Activated CD4-positive, alpha-beta T cell treated with anti-CD3 and anti-CD28 coated beads for 36 hours (primary cell): ENCODE measurements at regions of chr1 and their contacts with region 1.

Region 1: GRCh38 chr1:184805667-184806295 is 51.1 kb upstream of the EDEM3 start:
- DNase-seq: peak; percentile 91
- ATAC-seq: peak; percentile 99
- H3K4me3 Mint-ChIP-seq: no peak overlapping the region
- H3K27ac Mint-ChIP-seq: no peak overlapping the region
- H3K4me1 Mint-ChIP-seq: peaks cover 4% of the 10 kb centered on the region
- H3K27me3 Mint-ChIP-seq: no peaks in the 10 kb centered on the region

Region 2: GRCh38 chr1:184793967-184794366 is 11.8 kb before region 1 on chr1:
- CTCF ChIA-PET with region 1: interaction called, 12 read pairs
- POLR2A ChIA-PET with region 1: no interaction called
- intact Hi-C with region 1: no loop called
- DNase-seq: no peak
- ATAC-seq: no peak
- H3K4me3 Mint-ChIP-seq: no peak overlapping the region
- H3K27ac Mint-ChIP-seq: no peak overlapping the region
- H3K4me1 Mint-ChIP-seq: peaks cover 11% of the 10 kb centered on the region
- H3K27me3 Mint-ChIP-seq: no peaks in the 10 kb centered on the region

Region 3: DNA sequence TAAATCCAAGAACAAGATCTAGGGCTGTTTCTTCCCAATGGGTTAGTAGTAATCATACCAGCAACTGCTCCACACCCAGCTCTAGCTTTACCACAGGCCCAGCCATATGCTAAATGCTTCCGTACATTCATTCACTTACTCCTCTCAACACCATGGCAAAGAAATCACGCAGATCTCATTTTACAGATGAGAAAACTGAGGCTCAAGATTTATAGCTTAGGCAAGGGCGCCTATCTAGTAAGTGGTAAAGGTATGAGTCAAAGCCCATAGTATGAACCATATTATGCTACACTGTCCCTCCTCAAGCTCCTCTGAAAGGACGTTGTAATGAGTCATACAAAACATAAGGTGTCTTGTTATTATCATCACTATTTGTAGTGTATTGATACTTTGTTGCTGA is 86.3 kb after region 1 on chr1:
- CTCF ChIA-PET with region 1: interaction called, 4 read pairs
- POLR2A ChIA-PET with region 1: no interaction called
- intact Hi-C with region 1: loop called in 1 of 2 experiments (anchors 5 kb)
- DNase-seq: peak; percentile 48
- ATAC-seq: peak; percentile 74
- H3K4me3 Mint-ChIP-seq: no peak overlapping the region
- H3K27ac Mint-ChIP-seq: peak overlapping the region; percentile 67
- H3K4me1 Mint-ChIP-seq: peaks cover 52% of the 10 kb centered on the region
- H3K27me3 Mint-ChIP-seq: no peaks in the 10 kb centered on the region

Region 4: GRCh38 chr1:184982002-184982954 is 176.5 kb after region 1 on chr1:
- CTCF ChIA-PET with region 1: interaction called, 186 read pairs
- POLR2A ChIA-PET with region 1: no interaction called
- intact Hi-C with region 1: loop called (anchors 1 kb)
- DNase-seq: peak; percentile 88
- ATAC-seq: peak; percentile 99
- H3K4me3 Mint-ChIP-seq: no peak overlapping the region
- H3K27ac Mint-ChIP-seq: no peak overlapping the region
- H3K4me1 Mint-ChIP-seq: peaks cover 4% of the 10 kb centered on the region
- H3K27me3 Mint-ChIP-seq: peaks cover 16% of the 10 kb centered on the region

Region 5: GRCh38 chr1:184987696-184988095 is 181.9 kb after region 1 on chr1:
- CTCF ChIA-PET with region 1: interaction called, 186 read pairs
- POLR2A ChIA-PET with region 1: no interaction called
- intact Hi-C with region 1: loop called (anchors 1 kb)
- DNase-seq: no peak
- ATAC-seq: no peak
- H3K4me3 Mint-ChIP-seq: no peak overlapping the region
- H3K27ac Mint-ChIP-seq: no peak overlapping the region
- H3K4me1 Mint-ChIP-seq: no peaks in the 10 kb centered on the region
- H3K27me3 Mint-ChIP-seq: peaks cover 12% of the 10 kb centered on the region

Region 6: DNA sequence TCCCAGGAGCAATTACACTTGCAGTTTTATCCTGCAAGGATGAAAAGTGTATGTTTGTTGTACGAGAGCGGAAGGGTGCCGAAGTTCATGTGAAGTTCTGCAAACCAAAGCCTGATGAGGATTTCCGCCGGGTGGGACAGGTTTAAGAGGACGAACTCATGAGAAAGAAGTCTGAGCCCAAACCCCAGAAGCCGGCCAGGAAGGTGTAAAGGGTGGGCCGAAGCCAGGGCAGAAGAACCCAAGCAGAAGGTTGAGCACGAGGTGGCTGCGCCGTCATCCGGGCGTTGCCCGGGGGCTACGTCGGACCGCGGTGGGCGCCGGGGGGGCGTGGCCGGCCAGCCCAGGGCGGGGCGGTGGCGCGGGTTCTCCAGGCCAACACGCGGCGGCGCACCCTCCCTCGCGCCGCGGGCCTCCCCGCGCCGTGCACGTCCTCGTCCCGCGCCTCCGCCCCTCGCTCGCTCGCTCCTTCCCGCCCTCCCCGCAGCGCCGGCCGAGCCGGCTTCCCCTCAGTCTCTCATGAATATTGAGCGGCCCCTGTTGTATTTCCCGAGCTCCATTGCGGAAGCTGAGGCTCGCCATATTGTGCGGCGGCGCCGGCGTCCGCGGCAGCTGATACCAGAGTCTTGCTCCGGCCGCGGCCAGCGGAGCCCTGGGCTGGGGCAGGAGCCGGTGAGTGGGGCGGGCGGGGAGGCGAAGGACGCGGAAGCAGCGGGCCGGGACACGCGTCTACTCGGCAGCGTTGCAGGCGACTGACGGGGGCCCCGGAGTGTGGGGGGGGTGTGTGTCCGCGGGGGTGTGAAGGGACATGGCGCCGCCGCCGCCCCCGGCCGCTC is 239.4 kb after region 1 on chr1 and contains the start of gene RNF2:
- CTCF ChIA-PET with region 1: interaction called, 7 read pairs
- POLR2A ChIA-PET with region 1: no interaction called
- intact Hi-C with region 1: loop called in 1 of 2 experiments (anchors 5 kb)
- DNase-seq: peak; percentile 87
- ATAC-seq: peak; percentile 87
- H3K4me3 Mint-ChIP-seq: peak within 1 kb of the TSS; percentile 94
- H3K27ac Mint-ChIP-seq: peak within 1 kb of the TSS; percentile 86
- H3K4me1 Mint-ChIP-seq: peaks cover 34% of the 10 kb centered on the region
- H3K27me3 Mint-ChIP-seq: no peaks in the 10 kb centered on the region
- total RNA-seq, gene RNF2: 19.6 to 23.6 TPM

Region 7: GRCh38 chr1:185170291-185170848 is 364.6 kb after region 1 on chr1:
- CTCF ChIA-PET with region 1: interaction called, 17 read pairs
- POLR2A ChIA-PET with region 1: no interaction called
- intact Hi-C with region 1: loop called (anchors 1 kb)
- DNase-seq: peak; percentile 53
- ATAC-seq: peak; percentile 89
- H3K4me3 Mint-ChIP-seq: no peak overlapping the region
- H3K27ac Mint-ChIP-seq: no peak overlapping the region
- H3K4me1 Mint-ChIP-seq: peaks cover 7% of the 10 kb centered on the region
- H3K27me3 Mint-ChIP-seq: no peaks in the 10 kb centered on the region